Gastrocnemius medialis (tissue), 4 donors: ENCODE measurements at regions of chr6 and their contacts with region 1.

Region 1: GRCh38 chr6:36094753-36095496 is 35.4 kb upstream of the MAPK13 start:
- DNase-seq: peak; percentile 47 to 73
- ATAC-seq: peak; percentile 89 to 94
- H3K4me3 ChIP-seq: no peak overlapping the region
- H3K27ac ChIP-seq: peak overlapping the region; percentile 33 to 61 (median 59)
- H3K4me1 ChIP-seq: peaks cover 11 to 13% of the 10 kb centered on the region in 2 donors
- H3K27me3 ChIP-seq: no peaks in the 10 kb centered on the region
- CTCF ChIP-seq: peak; percentile 92 to 97 (median 95)
- POLR2A ChIP-seq: no peak

Region 2: GRCh38 chr6:35522660-35523658 is 572.0 kb before region 1 on chr6:
- in situ Hi-C with region 1: no loop called
- intact Hi-C with region 1: loop called (anchors 2 kb)
- DNase-seq: peak; percentile 41 to 63
- ATAC-seq: peak; percentile 85 to 96
- H3K4me3 ChIP-seq: peak overlapping the region in 3 of 4 donors; percentile 11 to 33 (median 29)
- H3K27ac ChIP-seq: no peak overlapping the region
- H3K4me1 ChIP-seq: no peaks in the 10 kb centered on the region
- H3K27me3 ChIP-seq: no peaks in the 10 kb centered on the region
- CTCF ChIP-seq: peak; percentile 84 to 100 (median 98)
- POLR2A ChIP-seq: no peak

Region 3: GRCh38 chr6:35920793-35921732 is 173.9 kb before region 1 on chr6 and contains the start of gene SRPK1:
- in situ Hi-C with region 1: no loop called
- intact Hi-C with region 1: loop called (anchors 10 kb)
- DNase-seq: peak; percentile 84 to 88
- ATAC-seq: peak; percentile 83 to 84
- H3K4me3 ChIP-seq: peak within 1 kb of the TSS; percentile 62 to 85 (median 70)
- H3K27ac ChIP-seq: peak within 1 kb of the TSS; percentile 79 to 90 (median 80)
- H3K4me1 ChIP-seq: peaks cover 21 to 22% of the 10 kb centered on the region in 2 donors
- H3K27me3 ChIP-seq: no peaks in the 10 kb centered on the region
- CTCF ChIP-seq: no peak
- POLR2A ChIP-seq: peak; percentile 83 to 88
- total RNA-seq, gene SRPK1: 38.2 to 104 (median 56.7) TPM